Sciatic nerve (tissue), 2 donors: ENCODE measurements at regions of chr14 and their contacts with region 1.

Region 1: DNA sequence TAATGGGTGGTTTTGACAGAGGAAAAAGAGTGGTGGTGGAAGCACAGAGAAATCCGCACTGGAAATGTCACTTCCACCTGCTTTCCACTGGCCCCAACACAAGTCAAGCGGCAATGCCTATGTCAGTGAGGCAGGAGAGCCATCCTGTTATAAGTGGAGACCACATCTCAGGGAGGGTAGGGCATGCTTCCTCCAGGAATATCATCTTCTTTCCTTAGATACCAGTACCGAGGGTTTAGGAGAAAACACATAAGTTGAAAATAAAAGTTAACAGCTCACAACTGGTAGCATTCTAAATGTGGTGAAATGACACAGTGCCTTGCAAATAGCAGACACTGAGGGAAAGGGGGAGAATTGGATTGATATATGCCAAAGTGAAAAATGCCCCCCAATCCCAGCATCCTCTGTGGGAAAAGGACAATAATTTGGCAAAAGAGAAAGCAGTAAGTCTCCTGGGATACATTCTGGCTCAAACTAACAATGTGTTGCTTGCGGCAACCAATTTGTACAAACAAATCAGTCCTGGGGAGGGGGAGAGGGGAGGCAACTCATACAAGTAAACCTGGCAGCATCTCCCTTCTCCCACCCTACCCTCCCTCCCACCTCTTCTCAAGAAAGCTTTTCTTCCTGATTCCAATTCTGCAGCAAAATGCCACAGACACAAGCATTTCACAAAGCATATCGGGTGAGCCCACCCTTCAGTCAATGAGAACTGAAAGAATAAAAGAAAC is 57.1 kb downstream of the STON2 start:
- DNase-seq: no peak
- ATAC-seq: peak; percentile 19

Region 2: GRCh38 chr14:81474148-81474492 is 131.1 kb after region 1 on chr14:
- intact Hi-C with region 1: no loop called
- DNase-seq: no peak
- ATAC-seq: no peak

Region 3: GRCh38 chr14:81729622-81730021 is 386.6 kb after region 1 on chr14:
- intact Hi-C with region 1: loop called (anchors 5 kb)
- DNase-seq: no peak
- ATAC-seq: no peak